ENCODE measurements at regions of chr20 and their contacts with region 1.

Region 1: DNA sequence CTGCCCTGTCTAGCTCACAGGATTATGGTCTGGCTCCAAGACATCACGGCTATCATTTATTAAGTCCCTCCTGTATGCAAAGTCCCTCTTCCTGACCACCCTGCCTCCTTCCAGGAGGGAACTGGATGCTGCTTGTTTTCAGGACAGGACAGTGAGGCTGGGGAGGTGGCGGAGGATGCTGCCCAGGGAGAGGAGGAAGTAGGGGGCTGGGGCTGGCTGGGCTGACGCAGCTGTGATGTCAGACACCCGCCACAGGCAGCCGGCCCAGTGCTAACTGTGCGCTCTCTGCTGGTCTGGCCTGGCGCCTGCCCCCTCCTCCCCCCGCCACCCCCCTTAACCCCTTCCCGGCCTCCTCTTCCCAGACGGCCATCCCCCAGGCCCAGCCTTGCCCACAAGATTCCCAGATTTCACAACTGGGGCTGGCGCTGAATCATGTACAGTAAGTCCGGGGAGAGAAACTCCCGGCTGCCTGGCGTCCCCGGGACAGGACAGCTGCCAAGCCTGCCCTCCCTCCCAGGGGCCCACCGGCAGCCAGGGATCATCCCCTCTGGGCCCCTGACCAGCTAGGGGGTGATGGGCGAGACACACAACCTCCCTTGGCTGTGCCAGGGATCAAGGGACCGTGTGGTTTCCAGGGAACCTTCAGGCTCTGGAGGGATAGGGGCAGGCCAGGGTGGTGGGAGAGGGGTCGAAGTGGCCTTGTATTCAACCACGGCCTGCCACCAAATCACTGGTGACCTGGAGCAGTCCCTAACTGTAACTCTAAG is 118.1 kb downstream of the CEBPB start:
- DNase-seq: peak; percentile 97

Region 2: GRCh38 chr20:50460460-50461267 is 152.0 kb after region 1 on chr20:
- intact Hi-C with region 1: loop called (anchors 5 kb)
- DNase-seq: peak; percentile 95

Measured in cardiac septum (tissue), 1 donor.